AG04449 (cell line): ENCODE measurements at regions of chr12 and their contacts with region 1.

Region 1: DNA sequence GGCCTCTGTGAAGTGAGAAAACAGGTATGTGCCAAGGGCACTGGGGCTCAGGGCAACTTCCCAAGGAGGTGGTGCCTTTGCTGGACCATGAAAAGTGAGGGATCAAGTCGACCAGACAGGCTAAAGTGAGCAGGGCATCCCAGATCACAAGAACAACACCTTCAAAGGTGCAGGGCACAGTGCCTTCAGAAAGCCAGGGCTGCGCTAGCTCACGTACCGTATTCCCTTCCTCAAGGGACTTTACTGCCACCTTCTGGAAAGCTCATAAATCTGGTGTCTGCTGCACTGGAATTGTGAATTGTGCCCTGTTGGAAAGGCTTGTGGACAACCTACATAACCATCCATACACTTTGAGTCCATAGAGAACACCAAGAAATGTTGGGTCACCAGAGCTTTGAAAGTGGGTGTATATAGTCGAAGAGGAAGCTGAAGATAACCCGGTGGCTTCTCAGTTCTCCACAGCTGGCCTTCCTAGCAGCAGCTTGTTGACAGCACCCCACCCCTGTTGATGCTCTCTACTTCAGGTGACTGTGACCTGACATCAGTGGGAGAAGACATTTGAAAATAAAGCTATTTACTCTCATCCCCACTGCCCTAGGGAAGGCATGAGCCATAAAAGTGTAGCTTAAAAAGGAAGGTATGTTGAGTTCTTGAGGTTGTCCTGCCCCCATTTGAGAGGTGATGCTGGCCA is 24.5 kb downstream of the FIGNL2 start:
- DNase-seq: peak; percentile 24
- H3K4me3 ChIP-seq: no peak overlapping the region
- CTCF ChIP-seq: peak; percentile 64

Region 2: GRCh38 chr12:51393676-51394545 is 430.1 kb before region 1 on chr12:
- CTCF ChIA-PET with region 1: interaction called, 10 read pairs
- POLR2A ChIA-PET with region 1: no interaction called
- DNase-seq: peak; percentile 84
- H3K4me3 ChIP-seq: peak overlapping the region; percentile 4; the same call in 1 of the 2 replicates
- CTCF ChIP-seq: no peak

Region 3: DNA sequence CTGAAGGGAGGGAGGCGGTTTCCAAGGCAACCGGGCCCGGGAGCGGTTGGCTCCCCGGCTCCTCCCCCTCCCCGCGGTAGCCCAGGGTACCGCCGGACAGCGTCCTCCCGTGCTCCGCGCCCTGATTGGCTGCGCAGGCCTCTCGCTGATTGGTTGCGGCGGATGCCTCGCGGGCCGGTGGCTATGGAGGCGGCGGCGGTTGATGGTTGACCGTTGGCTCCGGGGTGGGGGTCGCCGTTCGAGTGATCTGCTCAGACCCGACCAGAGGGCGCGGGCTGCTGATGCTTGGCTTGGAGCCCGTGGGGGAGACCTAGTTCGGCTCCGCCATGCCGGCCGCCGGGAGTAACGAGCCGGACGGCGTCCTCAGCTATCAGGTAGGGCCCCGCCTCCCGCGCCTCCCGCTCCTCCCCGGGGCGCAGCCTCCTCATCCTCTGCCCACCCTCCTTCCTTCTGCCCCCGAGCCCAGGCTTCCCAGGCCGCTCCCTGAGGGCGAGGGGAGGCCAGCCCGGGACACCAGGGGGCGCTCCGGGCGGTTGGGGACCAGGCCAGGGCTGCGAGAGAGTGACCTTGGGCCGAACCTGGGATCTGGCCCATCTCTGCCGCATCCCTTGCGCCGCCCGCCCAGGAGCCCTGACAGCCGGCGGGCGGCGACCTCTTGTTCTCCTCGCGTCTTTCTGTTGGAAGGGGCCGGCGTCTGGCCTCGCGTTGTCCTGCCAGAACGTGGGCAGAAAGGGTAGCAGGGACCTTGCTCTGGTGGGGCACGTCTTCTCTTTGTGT is 399.2 kb before region 1 on chr12 and contains the start of gene SLC4A8:
- CTCF ChIA-PET with region 1: interaction called, 188 read pairs
- POLR2A ChIA-PET with region 1: no interaction called
- DNase-seq: no peak
- H3K4me3 ChIP-seq: peak within 1 kb of the TSS; percentile 85
- CTCF ChIP-seq: peak; percentile 94

Region 4: GRCh38 chr12:51521554-51522276 is 302.3 kb before region 1 on chr12:
- CTCF ChIA-PET with region 1: interaction called, 19 read pairs
- POLR2A ChIA-PET with region 1: no interaction called
- DNase-seq: no peak
- H3K4me3 ChIP-seq: no peak overlapping the region
- CTCF ChIP-seq: peak; percentile 22

Region 5: GRCh38 chr12:51871126-51871525 is 47.1 kb after region 1 on chr12:
- CTCF ChIA-PET with region 1: interaction called, 28 read pairs
- POLR2A ChIA-PET with region 1: no interaction called
- DNase-seq: no peak
- H3K4me3 ChIP-seq: no peak overlapping the region
- CTCF ChIP-seq: no peak

Region 6: GRCh38 chr12:52052464-52053186 is 228.6 kb after region 1 on chr12:
- CTCF ChIA-PET with region 1: no interaction called
- POLR2A ChIA-PET with region 1: no interaction called
- DNase-seq: no peak
- H3K4me3 ChIP-seq: no peak overlapping the region
- CTCF ChIP-seq: no peak

Region 7: GRCh38 chr12:52130711-52131110 is 306.7 kb after region 1 on chr12:
- CTCF ChIA-PET with region 1: no interaction called
- POLR2A ChIA-PET with region 1: no interaction called
- DNase-seq: no peak
- H3K4me3 ChIP-seq: no peak overlapping the region
- CTCF ChIP-seq: no peak